MCF 10A (cell line): ENCODE measurements at regions of chr11 and their contacts with region 1.

Region 1: DNA sequence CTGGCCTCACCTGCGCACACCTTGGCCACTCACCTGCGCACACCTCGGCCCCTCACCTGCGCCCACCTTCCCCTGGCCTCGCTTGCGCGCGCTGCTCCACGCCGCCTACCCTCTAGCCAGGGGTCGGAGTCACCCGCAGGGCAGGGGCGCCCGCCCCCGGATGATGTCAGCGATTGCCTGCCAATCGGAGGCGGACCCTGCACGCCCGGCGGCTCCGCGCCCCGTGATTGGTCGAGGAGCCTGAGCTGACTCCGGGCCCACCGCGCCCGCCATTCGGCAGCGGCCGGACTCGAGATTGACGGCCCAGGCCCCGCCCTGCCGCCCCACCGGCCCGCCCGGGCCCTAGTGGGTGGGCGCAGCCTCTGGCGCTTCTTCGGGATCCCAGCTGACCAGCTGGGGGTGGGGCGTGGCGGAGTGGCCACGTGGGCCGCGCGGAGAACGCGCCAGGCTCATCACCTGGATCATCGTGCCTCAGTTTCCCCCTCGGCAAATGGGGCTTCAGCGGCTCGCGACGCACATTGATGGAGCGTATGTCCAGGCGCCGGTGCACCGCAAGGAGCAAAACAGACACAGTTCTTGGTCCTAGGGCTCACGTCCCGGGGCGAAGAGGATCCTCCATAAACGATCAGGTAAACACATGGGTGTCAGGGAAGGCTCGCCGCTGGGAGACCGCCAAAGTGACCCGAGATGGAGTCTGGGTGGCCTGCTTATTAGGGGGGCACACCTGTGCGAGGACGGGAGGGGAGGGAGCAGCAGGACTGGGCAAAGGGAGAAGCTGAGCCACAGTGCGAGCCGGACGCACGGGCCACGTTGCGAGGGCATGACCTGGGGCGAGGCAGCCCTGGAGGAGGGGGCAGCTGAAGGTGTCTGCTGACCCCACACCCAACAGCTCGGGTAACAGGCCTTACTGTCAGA is at the start of gene DHCR7:
- DNase-seq: peak; percentile 90
- H3K4me3 Mint-ChIP-seq: peak within 1 kb of the TSS; percentile 94
- H3K27ac Mint-ChIP-seq: peak within 1 kb of the TSS; percentile 76
- H3K4me1 Mint-ChIP-seq: peaks cover 42% of the 10 kb centered on the region
- H3K27me3 Mint-ChIP-seq: no peaks in the 10 kb centered on the region
- CTCF ChIP-seq: no peak
- total RNA-seq, gene DHCR7: 48.2 and 72.6 TPM in 2 replicates

Region 2: DNA sequence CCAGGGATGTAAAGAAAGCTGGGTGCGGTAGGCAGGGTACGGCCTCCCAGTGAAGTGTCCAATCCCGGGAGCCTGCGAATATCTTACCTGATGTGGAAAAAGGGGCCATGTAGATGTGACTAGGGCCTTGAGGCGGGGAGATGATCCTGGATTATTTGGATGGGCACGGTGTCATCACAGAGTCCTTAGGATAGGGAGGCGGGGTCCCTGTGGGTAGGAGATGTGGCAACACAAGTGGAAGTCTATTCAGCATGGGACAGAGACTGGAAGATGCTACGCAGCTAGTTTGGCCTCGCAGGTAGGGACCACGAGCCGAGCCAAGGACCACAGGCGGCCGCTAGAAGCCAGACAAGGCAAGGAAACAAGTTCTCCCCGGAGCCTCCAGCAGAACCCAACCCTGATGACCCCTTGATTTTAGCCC is 149.7 kb before region 1 on chr11:
- CTCF ChIA-PET with region 1: no interaction called
- POLR2A ChIA-PET with region 1: interaction called, 6 read pairs
- intact Hi-C with region 1: loop called (anchors 2 kb)
- DNase-seq: no peak
- H3K4me3 Mint-ChIP-seq: peak overlapping the region; percentile 56
- H3K27ac Mint-ChIP-seq: peak overlapping the region; percentile 97
- H3K4me1 Mint-ChIP-seq: peaks cover 21% of the 10 kb centered on the region
- H3K27me3 Mint-ChIP-seq: no peaks in the 10 kb centered on the region
- CTCF ChIP-seq: no peak

Region 3: GRCh38 chr11:71425855-71426254 is 22.7 kb before region 1 on chr11:
- CTCF ChIA-PET with region 1: interaction called, 5 read pairs
- POLR2A ChIA-PET with region 1: interaction called, 26 read pairs
- intact Hi-C with region 1: no loop called
- DNase-seq: peak; percentile 79
- H3K4me3 Mint-ChIP-seq: no peak overlapping the region
- H3K27ac Mint-ChIP-seq: no peak overlapping the region
- H3K4me1 Mint-ChIP-seq: peaks cover 20% of the 10 kb centered on the region
- H3K27me3 Mint-ChIP-seq: no peaks in the 10 kb centered on the region
- CTCF ChIP-seq: no peak

Region 4: DNA sequence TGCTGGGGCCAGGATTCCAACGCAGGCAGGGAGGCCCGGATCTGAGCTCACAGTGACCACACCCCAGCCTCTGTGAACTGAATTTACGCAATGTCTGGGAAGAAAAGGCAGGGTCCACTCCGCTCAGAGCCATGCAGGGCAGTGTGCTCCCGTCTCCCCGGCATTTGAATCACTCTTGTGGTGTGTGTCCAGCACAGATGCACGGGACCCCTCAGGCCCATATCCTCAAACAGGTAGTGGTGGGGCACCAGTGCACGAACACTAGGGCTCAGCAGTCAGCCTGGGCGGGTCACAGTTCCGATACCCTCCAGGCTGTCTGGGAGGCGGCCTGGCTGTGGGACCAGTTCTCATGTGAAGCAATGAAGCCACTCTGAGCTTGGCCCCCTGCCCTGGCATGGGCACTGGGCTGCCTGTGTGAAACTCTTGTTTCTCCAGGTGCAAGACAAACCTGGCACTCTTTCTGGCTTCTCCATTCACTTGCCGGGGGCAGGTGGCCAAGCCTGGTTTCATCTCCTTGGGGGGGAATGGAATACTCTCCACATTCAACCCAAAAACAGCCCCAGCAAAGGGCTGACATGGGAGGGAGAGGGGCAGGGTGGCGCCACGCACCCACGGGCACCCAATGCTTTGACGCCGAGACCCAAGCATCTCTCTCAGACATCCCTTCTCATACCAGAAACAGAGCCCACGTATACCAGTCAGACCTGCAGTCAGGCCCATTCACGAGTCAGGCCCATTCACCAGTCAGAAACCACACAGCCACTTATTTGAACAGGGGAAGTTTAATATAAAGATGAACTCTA is 14.7 kb before region 1 on chr11:
- CTCF ChIA-PET with region 1: interaction called, 3 read pairs
- POLR2A ChIA-PET with region 1: interaction called, 25 read pairs
- intact Hi-C with region 1: no loop called
- DNase-seq: peak; percentile 77
- H3K4me3 Mint-ChIP-seq: peak overlapping the region; percentile 12
- H3K27ac Mint-ChIP-seq: no peak overlapping the region
- H3K4me1 Mint-ChIP-seq: peaks cover 19% of the 10 kb centered on the region
- H3K27me3 Mint-ChIP-seq: no peaks in the 10 kb centered on the region
- CTCF ChIP-seq: no peak

Region 5: GRCh38 chr11:71580057-71581003 is 131.8 kb after region 1 on chr11:
- CTCF ChIA-PET with region 1: no interaction called
- POLR2A ChIA-PET with region 1: no interaction called
- intact Hi-C with region 1: no loop called
- DNase-seq: peak; percentile 78
- H3K4me3 Mint-ChIP-seq: no peak overlapping the region
- H3K27ac Mint-ChIP-seq: no peak overlapping the region
- H3K4me1 Mint-ChIP-seq: no peaks in the 10 kb centered on the region
- H3K27me3 Mint-ChIP-seq: no peaks in the 10 kb centered on the region
- CTCF ChIP-seq: peak; percentile 81